ENCODE measurements at regions of chr19 and their contacts with region 1.

Region 1: GRCh38 chr19:52237771-52238400 is 31.5 kb upstream of the ZNF766 start:
- DNase-seq: peak; percentile 68
- ATAC-seq: peak; percentile 92
- H3K4me3 Mint-ChIP-seq: no peak overlapping the region
- H3K27ac Mint-ChIP-seq: no peak overlapping the region
- H3K4me1 Mint-ChIP-seq: peaks cover 5% of the 10 kb centered on the region
- H3K27me3 Mint-ChIP-seq: no peaks in the 10 kb centered on the region
- CTCF ChIP-seq: peak; percentile 91

Region 2: GRCh38 chr19:52139252-52140031 is 98.4 kb before region 1 on chr19 and contains the start of gene ZNF616:
- CTCF ChIA-PET with region 1: interaction called, 18 read pairs
- POLR2A ChIA-PET with region 1: interaction called, 3 read pairs
- intact Hi-C with region 1: no loop called
- DNase-seq: peak; percentile 97
- ATAC-seq: peak; percentile 66
- H3K4me3 Mint-ChIP-seq: peak within 1 kb of the TSS; percentile 95
- H3K27ac Mint-ChIP-seq: peak within 1 kb of the TSS; percentile 91
- H3K4me1 Mint-ChIP-seq: peaks cover 25% of the 10 kb centered on the region
- H3K27me3 Mint-ChIP-seq: no peaks in the 10 kb centered on the region
- CTCF ChIP-seq: peak; percentile 93
- total RNA-seq, gene ZNF616: 11.2 to 11.7 TPM

Region 3: DNA sequence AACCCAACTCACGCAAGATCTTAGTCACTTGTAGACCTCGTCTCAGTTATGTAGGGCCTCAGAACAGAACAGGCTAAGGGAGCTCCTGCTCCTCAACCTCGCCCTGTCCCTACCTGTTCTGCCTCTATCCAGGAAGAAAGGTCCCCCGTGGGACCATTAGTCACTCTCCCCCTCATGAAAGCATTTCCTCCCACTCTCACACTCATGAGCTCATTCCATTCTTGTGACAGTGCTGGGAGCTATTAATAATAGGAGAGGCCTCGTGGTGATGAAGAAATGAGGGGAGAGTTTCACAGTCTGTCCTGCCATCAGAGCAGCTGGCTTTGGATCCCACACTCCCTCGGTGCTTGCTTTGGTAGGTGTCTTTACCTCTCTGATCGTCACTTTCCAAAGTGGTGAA is 37.8 kb before region 1 on chr19:
- CTCF ChIA-PET with region 1: interaction called, 10 read pairs
- POLR2A ChIA-PET with region 1: no interaction called
- intact Hi-C with region 1: no loop called
- DNase-seq: no peak
- ATAC-seq: no peak
- H3K4me3 Mint-ChIP-seq: no peak overlapping the region
- H3K27ac Mint-ChIP-seq: peak overlapping the region; percentile 5
- H3K4me1 Mint-ChIP-seq: peaks cover 40% of the 10 kb centered on the region
- H3K27me3 Mint-ChIP-seq: no peaks in the 10 kb centered on the region
- CTCF ChIP-seq: no peak